ENCODE measurements at regions of chr10 and their contacts with region 1.

Region 1: GRCh38 chr10:5446390-5446926 is 34.1 kb downstream of the NET1 start:
- DNase-seq: peak; percentile 95 to 98 (median 96)
- H3K4me3 ChIP-seq: peak overlapping the region; percentile 49
- H3K27ac ChIP-seq: peak overlapping the region in 1 of 2 donors; percentile 51
- H3K4me1 ChIP-seq: peaks cover 3% of the 10 kb centered on the region
- H3K27me3 ChIP-seq: no peaks in the 10 kb centered on the region
- CTCF ChIP-seq: no peak
- EP300 ChIP-seq: no peak
- POLR2A ChIP-seq: peak; percentile 86

Region 2: GRCh38 chr10:4725917-4726606 is 720.4 kb before region 1 on chr10:
- intact Hi-C with region 1: no loop called
- DNase-seq: no peak
- H3K4me3 ChIP-seq: no peak overlapping the region
- H3K27ac ChIP-seq: no peak overlapping the region
- H3K4me1 ChIP-seq: no peaks in the 10 kb centered on the region
- H3K27me3 ChIP-seq: no peaks in the 10 kb centered on the region
- CTCF ChIP-seq: no peak
- EP300 ChIP-seq: no peak
- POLR2A ChIP-seq: no peak

Region 3: DNA sequence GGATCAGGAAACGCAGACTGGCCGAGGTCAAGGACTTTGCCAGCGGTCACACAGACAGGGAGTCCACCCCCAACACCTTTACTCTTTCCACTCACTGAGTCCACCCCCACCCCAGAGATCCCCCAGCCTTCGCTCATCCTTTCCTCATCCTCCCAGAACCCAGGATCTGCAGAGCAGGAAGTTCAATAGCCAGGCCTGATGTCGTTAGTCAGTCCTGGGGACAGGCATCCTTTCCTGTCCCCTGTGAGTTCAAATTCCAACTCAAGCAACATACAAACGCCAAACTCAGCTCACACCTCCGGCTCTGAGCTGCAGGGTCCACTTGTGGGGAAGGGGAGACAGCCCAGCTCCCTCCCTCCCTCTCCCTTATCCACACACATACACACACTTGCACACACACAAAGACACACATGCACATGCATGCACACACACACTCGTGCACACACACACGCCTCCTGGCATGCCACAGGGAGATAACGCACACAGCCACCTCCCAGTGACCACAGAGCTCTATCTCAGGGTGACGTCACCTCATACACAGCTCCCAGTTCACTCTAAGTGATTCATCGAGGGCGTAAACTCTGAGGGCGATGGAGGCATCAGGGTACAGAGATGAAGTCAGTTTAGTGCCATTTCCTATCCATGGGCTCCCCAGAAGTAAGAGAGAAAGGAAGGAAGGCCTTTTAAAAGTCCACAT is 102.2 kb after region 1 on chr10:
- intact Hi-C with region 1: loop called in 1 of 4 experiments (anchors 10 kb)
- DNase-seq: peak in 2 of 5 donors; percentile 21 to 42
- H3K4me3 ChIP-seq: no peak overlapping the region
- H3K27ac ChIP-seq: peak overlapping the region in 1 of 2 donors; percentile 66
- H3K4me1 ChIP-seq: peaks cover 11% of the 10 kb centered on the region
- H3K27me3 ChIP-seq: no peaks in the 10 kb centered on the region
- CTCF ChIP-seq: no peak
- EP300 ChIP-seq: no peak
- POLR2A ChIP-seq: no peak

Region 4: DNA sequence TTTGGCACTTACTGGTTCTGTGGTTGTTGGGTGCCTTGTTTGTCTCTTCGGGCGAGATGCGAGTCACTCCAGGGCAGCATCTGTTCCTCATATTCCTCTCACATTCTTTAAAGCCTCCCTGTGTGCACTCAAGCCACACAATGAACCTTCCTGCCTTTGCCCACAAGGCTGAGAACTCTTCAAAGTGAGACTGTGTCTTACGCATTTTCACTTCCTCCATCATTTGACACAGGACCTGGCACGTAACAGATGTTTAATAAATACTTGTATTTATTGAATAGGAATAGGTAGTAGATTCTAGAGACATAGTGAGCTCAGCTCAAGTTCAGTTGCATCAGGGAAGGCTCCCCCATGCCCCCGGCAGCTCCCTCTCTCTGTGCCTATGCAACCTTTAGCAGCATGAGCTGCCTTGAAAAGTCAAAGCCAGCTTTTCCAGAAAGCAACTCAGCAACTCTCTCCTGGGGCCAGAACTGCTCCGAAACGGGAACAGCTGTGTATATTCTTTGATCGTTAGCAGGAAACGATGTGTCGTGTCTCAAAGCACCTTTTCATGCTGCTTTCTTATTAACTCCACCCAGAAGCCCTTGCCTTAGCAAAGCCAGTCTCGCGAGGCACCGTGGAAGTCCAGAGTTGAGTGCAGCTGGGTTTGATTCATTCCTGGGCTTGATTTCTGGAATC is 853.8 kb after region 1 on chr10:
- intact Hi-C with region 1: no loop called
- DNase-seq: no peak
- H3K4me3 ChIP-seq: no peak overlapping the region
- H3K27ac ChIP-seq: no peak overlapping the region
- H3K4me1 ChIP-seq: no peaks in the 10 kb centered on the region
- H3K27me3 ChIP-seq: no peaks in the 10 kb centered on the region
- CTCF ChIP-seq: no peak
- EP300 ChIP-seq: no peak
- POLR2A ChIP-seq: no peak